Sigmoid colon (tissue), 7 donors: ENCODE measurements at regions of chr4 and their contacts with region 1.

Region 1: GRCh38 chr4:152591396-152591795 is 55.5 kb upstream of the FBXW7 start:
- DNase-seq: peak; percentile 85
- H3K4me3 ChIP-seq: peak overlapping the region in 3 of 4 donors; percentile 3 to 25 (median 16)
- H3K27ac ChIP-seq: peak overlapping the region; percentile 49 to 81 (median 64)
- H3K4me1 ChIP-seq: peaks cover 0 to 28% (median 24%) of the 10 kb centered on the region in 4 donors
- H3K27me3 ChIP-seq: no peaks in the 10 kb centered on the region
- CTCF ChIP-seq: no peak
- EP300 ChIP-seq: no peak
- POLR2A ChIP-seq: no peak

Region 2: DNA sequence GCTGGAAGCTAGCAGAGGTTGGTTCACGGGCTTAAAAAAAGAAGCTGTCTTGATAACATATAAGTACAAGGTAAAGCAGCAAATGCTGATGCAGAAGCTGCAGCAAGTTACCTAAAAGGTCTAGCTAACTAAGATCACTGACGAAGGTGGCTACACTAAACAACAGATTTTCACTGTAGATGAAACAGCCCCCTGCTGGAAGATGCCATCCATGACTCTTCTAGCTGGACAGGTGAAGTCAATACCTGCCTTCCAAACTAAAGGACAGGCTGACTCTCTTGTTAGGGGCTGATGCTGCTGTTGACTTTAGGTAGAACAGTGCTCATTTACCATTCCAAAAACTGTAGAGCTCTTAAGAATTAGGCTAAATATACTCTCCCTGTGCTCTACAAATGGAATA is 155.0 kb before region 1 on chr4:
- intact Hi-C with region 1: no loop called
- DNase-seq: no peak
- H3K4me3 ChIP-seq: no peak overlapping the region
- H3K27ac ChIP-seq: no peak overlapping the region
- H3K4me1 ChIP-seq: no peaks in the 10 kb centered on the region
- H3K27me3 ChIP-seq: no peaks in the 10 kb centered on the region
- CTCF ChIP-seq: no peak
- EP300 ChIP-seq: no peak
- POLR2A ChIP-seq: no peak

Region 3: DNA sequence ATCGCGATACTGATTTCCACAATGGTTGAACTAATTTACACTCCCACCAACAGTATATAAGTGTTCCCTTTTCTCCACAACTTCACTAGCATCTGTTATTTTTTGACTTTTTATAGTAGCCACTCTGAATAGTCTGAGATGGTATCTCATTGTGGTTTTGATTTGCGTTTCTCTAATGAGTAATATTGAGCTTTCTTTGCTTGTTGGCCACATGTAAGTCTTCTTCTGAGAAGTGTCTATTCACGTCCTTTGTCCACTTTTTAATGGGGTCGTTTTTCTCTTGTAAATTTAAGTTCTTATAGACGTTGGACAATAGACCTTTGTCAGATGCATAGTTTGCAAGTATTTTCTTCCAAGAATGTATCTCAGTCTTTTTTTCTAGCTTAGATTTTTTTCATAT is 65.5 kb before region 1 on chr4:
- intact Hi-C with region 1: no loop called
- DNase-seq: no peak
- H3K4me3 ChIP-seq: no peak overlapping the region
- H3K27ac ChIP-seq: no peak overlapping the region
- H3K4me1 ChIP-seq: peaks cover 0 to 8% (median 0%) of the 10 kb centered on the region in 4 donors
- H3K27me3 ChIP-seq: no peaks in the 10 kb centered on the region
- CTCF ChIP-seq: no peak
- EP300 ChIP-seq: no peak
- POLR2A ChIP-seq: no peak

Region 4: DNA sequence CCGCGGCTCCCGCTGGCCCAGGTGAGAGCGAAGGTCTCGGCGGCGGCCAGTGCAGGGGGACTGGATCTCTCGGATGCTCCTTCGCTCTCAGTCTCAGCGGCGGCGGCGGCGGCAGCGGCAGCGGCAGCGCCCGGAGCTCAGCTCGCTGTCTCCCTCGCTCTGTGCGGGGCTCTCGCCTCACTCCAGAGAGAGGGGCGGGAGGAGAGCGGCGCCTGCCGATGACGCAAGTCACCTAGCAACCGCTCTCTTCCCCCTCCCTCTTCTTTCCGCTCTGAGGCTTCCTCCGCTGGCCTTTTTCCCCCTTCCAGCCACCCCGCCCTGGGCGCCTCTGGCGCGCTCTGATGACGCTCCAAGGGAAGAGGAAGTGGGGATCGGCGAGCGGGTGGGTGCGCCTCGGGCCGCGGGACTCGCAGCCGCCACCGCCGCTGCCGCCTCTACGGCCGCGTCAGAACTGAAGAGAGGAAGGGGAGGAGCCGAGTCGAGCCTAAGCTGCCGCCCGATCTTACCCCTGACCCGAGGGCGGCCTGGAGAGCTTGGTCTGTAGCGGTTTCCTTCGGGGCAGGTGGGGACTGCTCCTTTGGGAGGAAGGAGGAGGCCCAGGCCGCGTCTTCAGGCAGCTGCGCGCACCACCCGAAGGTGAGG is 55.4 kb before region 1 on chr4 and contains the start of gene FBXW7:
- intact Hi-C with region 1: loop called (anchors 2 kb)
- DNase-seq: peak; percentile 99
- H3K4me3 ChIP-seq: peak within 1 kb of the TSS; percentile 93 to 98 (median 96)
- H3K27ac ChIP-seq: peak within 1 kb of the TSS; percentile 93 to 97 (median 96)
- H3K4me1 ChIP-seq: peaks cover 0 to 45% (median 30%) of the 10 kb centered on the region in 4 donors
- H3K27me3 ChIP-seq: no peaks in the 10 kb centered on the region
- CTCF ChIP-seq: no peak
- EP300 ChIP-seq: peak in 2 of 4 donors; percentile 49 to 80
- POLR2A ChIP-seq: peak; percentile 71 to 84
- total RNA-seq, gene FBXW7: 74.9 to 122 (median 81.4) TPM

Region 5: GRCh38 chr4:152563209-152563608 is 28.2 kb before region 1 on chr4:
- intact Hi-C with region 1: no loop called
- DNase-seq: no peak
- H3K4me3 ChIP-seq: no peak overlapping the region
- H3K27ac ChIP-seq: no peak overlapping the region
- H3K4me1 ChIP-seq: no peaks in the 10 kb centered on the region
- H3K27me3 ChIP-seq: no peaks in the 10 kb centered on the region
- CTCF ChIP-seq: no peak
- EP300 ChIP-seq: no peak
- POLR2A ChIP-seq: no peak

Region 6: GRCh38 chr4:152640058-152640833 is 48.9 kb after region 1 on chr4:
- intact Hi-C with region 1: loop called (anchors 5 kb)
- DNase-seq: no peak
- H3K4me3 ChIP-seq: no peak overlapping the region
- H3K27ac ChIP-seq: no peak overlapping the region
- H3K4me1 ChIP-seq: peaks cover 0 to 14% (median 8%) of the 10 kb centered on the region in 4 donors
- H3K27me3 ChIP-seq: no peaks in the 10 kb centered on the region
- CTCF ChIP-seq: peak in 3 of 4 experiments; percentile 16 to 57 (median 40)
- EP300 ChIP-seq: no peak
- POLR2A ChIP-seq: no peak

Region 7: DNA sequence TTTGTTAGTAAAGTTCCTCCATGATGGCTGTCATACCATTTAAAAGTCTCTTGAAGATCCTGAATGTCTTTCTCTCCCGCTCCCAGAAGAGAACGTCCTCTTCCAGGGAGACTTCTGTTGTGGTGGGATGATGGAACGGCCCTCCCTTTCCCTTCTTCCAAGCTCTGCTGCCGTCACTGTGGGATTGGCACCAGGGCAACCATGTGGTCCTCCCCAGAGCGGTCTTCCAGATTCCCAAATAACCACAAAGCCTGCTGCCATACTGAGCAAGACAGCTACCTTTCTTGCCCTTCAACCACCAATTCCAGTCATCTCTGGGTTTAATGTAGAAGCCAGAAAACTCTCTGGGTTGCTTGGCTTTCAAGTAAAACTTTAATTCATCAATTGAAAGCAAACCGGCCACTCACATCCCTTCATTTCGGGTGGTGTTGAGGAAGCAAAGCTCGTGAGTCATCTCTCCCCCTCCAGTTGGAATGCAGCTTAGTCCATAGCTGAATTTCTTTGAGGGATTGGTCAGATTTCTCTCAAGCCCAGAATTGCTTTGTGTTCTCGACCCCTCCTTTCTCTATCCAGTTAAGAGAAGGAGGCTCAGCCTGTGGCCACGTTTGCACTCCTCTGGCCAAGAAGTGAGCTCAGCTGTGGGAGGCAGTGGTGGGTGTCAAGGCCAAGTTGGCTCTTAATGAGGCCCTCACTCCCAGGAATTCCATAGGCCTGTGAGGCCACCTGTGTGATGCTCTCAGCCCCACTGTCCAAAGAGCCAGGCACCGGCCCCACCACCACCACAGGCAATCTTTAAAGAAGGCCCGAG is 381.6 kb after region 1 on chr4:
- intact Hi-C with region 1: no loop called
- DNase-seq: no peak
- H3K4me3 ChIP-seq: no peak overlapping the region
- H3K27ac ChIP-seq: peak overlapping the region in 1 of 4 donors; percentile 14
- H3K4me1 ChIP-seq: no peaks in the 10 kb centered on the region
- H3K27me3 ChIP-seq: no peaks in the 10 kb centered on the region
- CTCF ChIP-seq: no peak
- EP300 ChIP-seq: no peak
- POLR2A ChIP-seq: no peak